ENCODE measurements at regions of chr13 and their contacts with region 1.

Region 1: DNA sequence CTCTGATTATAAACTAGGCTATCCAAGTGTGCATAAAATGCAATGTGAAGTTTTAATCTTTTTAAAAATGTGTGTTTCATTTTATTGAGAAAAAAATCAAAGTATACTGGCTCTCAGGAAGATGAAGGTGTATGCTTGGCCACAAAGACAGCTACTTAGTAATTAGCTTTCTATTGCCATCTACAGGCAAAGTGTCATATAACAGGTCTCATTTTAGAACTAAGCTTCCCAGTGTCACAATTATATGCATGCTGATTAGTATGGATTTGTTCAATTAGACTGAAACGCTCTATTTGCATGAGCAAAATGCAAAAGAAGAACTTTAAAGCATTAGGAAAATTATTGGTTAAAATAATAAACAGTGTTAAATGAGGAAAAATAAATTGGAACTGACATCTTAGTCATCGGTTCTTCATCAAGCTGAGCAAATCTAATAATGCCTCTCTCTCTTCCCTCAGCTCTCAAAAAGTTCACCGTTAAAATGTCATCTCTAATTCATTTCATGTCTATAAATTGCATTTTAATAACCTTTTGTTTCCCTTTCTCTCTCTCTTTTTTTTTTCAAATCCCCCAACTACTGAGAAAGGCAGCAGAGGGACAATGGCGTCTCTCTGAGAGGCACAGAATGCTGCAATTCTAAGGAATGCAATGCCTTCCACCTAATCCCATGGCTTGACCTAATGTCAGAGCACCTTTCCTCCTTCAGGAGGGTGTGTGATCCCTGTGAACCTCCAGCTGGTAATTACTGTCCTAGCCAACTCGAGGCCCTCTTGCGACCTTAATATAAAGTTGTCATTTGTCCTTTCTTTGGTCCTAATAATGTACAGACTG is 313.1 kb upstream of the MAB21L1 start:
- DNase-seq: no peak
- ATAC-seq: peak in 3 of 4 donors; percentile 60 to 79 (median 64)
- H3K4me3 ChIP-seq: no peak overlapping the region
- H3K27ac ChIP-seq: no peak overlapping the region
- H3K4me1 ChIP-seq: peaks cover 0 to 4% (median 0%) of the 10 kb centered on the region in 12 donors
- H3K27me3 ChIP-seq: no peaks in the 10 kb centered on the region
- CTCF ChIP-seq: peak; percentile 17 to 71 (median 61)
- POLR2A ChIP-seq: no peak

Region 2: DNA sequence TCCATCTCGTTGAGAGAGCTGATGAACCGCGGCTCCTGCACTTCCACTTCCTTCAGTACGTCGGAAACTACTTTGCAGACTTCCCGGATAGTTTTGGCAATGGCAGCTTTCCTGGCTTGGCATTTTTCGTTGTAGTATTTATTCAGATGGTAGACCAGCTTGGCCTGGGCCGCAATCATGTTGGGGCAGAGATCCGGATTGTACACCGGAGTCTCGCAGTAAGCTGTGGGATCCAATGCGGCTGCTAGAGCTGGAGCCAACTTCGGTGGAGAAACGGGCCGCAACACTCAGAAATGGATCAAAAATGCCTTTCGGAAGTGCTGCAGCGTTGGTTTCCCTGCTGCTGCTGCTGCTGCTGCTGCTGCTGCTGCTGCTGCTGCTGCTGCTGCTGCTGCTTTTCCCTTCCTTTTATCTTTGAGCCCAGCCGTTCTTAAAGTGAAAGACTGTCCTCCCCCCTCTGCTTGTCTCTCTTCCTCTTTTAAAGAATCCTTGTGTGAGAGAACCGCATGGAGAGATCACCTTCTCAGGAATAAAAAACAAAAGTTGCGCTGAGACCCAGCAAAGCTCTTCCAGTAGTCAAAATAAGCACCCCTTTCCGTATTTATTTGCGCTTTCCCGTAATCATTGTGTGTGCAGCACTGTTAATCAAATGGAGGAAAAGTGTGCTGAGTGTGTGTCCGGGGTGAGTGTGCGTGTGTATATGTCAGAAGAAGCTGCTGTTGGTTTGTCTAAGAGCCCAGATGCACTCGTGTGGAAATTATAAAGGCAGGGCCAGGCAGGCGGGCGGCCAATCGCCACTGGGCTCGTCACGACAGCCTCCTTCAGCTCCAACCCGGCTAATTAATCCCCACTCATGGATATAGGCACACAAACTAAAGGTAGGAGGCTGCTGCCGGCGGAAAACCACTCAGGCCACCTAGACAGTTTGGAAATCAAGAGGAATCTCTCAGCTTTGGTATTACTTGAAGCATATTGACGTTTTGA is 313.3 kb before region 1 on chr13 and contains the start of gene MAB21L1:
- intact Hi-C with region 1: loop called in 1 of 10 experiments (anchors 10 kb)
- DNase-seq: peak in 3 of 5 donors; percentile 12 to 46 (median 33)
- ATAC-seq: peak; percentile 34 to 62 (median 52)
- H3K4me3 ChIP-seq: peak within 1 kb of the TSS; percentile 32 to 72 (median 56)
- H3K27ac ChIP-seq: peak within 1 kb of the TSS in 11 of 12 donors; percentile 10 to 70 (median 43)
- H3K4me1 ChIP-seq: peaks cover 0 to 20% (median 0%) of the 10 kb centered on the region in 12 donors
- H3K27me3 ChIP-seq: peaks cover 0 to 55% (median 0%) of the 10 kb centered on the region in 9 donors
- CTCF ChIP-seq: no peak
- POLR2A ChIP-seq: no peak
- total RNA-seq, gene MAB21L1: 0.09 to 0.99 (median 0.27) TPM in 8 of 9 donors, not detected in the other

Region 3: DNA sequence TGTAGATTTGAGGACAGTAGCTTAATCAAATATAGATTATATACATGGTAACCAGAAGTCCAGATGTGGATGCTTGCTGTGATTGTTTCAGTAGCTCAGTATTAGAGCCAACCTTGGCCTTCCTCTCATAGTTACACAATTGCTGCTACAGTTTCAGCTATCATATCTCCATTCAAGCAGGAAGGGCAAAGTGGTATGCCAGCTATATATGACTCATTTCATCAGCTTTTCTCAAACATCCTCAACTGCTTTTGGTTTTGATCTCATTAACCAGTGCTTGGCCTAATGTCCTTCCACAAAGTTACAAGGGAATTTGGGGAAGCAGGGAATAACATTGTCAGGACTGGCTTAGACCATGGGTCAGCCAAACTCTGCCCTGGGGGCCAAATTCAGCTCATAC is 240.1 kb before region 1 on chr13:
- intact Hi-C with region 1: no loop called
- DNase-seq: no peak
- ATAC-seq: peak in 2 of 4 donors; percentile 53 to 85
- H3K4me3 ChIP-seq: no peak overlapping the region
- H3K27ac ChIP-seq: no peak overlapping the region
- H3K4me1 ChIP-seq: peaks cover 0 to 9% (median 0%) of the 10 kb centered on the region in 12 donors
- H3K27me3 ChIP-seq: no peaks in the 10 kb centered on the region
- CTCF ChIP-seq: no peak
- POLR2A ChIP-seq: no peak

Region 4: DNA sequence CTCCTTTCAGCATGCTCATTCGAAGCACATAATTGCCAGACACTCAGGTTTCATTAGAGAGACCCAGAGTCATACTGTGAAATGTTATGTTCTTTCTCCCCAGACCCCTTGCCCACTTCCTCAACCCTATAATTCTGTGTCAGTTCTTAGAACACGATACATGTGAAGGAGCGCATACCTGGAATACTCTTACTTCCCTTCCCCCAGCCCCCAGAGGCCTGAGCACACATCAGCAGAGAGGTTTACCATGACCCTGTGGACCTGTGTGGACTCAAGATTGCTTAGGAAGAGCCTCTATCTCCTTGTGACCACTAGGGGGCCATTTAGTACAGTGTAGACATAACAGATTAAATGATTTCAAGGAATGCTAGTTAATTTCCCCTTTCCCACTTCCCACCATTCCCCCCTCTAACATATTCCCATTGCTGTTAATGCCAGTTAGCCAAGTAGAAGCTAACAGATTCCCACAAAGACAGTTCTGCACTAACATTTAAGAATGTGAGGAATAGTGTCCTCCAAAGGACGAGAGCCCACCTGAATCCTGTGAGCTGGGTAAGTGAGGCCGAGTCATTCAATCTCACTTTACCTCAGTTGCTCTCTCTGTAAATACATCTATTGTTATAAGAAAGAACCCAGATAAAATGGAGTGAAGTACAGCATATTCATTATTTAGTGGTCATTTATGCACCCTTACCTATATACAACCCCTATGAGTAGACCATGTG is 158.8 kb before region 1 on chr13:
- intact Hi-C with region 1: loop called in 9 of 10 experiments (anchors 1 to 10 kb)
- DNase-seq: no peak
- ATAC-seq: peak in 3 of 4 donors; percentile 70 to 82 (median 79)
- H3K4me3 ChIP-seq: no peak overlapping the region
- H3K27ac ChIP-seq: no peak overlapping the region
- H3K4me1 ChIP-seq: no peaks in the 10 kb centered on the region
- H3K27me3 ChIP-seq: no peaks in the 10 kb centered on the region
- CTCF ChIP-seq: peak; percentile 44 to 77 (median 69)
- POLR2A ChIP-seq: no peak

Region 5: DNA sequence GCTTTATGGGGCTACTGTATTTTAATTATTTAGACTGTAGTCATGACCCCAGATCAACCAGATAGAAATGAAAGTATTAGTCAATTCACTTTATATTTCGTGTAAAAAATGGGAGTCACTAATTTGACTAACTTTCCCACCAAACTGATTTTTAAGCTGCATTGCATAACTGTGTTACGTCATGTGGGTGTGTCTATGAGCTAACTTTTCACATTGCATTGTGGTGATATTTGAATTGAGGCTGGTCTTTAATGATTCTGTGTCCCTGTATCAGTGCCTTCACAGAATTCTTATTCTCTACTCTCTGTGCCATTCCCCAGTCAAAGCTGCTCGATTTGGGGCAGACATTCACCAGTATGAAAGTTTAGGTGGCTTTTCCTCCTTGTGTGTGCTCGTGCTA is 140.4 kb before region 1 on chr13:
- intact Hi-C with region 1: loop called in 1 of 10 experiments (anchors 10 kb)
- DNase-seq: no peak
- ATAC-seq: peak in 2 of 4 donors; percentile 20 to 50
- H3K4me3 ChIP-seq: no peak overlapping the region
- H3K27ac ChIP-seq: no peak overlapping the region
- H3K4me1 ChIP-seq: peaks cover 0 to 6% (median 0%) of the 10 kb centered on the region in 12 donors
- H3K27me3 ChIP-seq: no peaks in the 10 kb centered on the region
- CTCF ChIP-seq: no peak
- POLR2A ChIP-seq: no peak

Region 6: DNA sequence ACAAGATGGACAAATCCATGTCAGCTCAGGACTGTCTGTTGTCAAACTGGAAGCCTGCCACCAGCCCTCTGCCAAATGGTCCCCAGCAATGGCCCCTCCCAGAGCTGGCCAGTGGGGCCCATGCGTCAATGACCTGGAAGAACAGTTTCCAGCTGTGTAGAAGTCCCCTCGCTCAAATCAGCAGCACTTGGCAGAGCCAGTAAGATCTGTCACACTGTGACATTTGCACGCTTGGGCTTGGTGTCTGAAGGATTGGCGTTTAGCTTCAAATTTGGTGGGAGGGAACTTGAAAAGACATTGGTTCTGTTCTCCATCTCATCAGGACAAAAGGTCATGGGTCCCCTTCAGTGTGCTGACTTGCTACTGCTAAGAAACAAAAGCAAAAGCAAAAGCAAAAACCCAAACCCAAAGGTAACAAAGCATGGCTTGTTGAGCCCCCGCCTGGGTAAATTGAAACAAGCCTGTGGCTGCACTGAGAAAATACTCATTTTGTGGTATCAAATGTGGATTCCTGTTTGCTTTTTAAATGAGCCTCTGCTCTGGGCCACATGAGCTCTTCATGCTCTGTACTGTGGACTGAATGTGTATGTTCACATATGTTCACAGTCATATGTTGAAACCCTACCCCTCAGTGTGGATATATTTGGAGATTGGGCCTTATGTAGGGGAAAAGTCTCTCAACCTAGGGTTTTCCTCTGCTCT is 59.5 kb before region 1 on chr13:
- intact Hi-C with region 1: loop called in 1 of 10 experiments (anchors 5 kb)
- DNase-seq: peak; percentile 77 to 94 (median 86)
- ATAC-seq: peak; percentile 87 to 96 (median 92)
- H3K4me3 ChIP-seq: no peak overlapping the region
- H3K27ac ChIP-seq: peak overlapping the region in 11 of 12 donors; percentile 9 to 75 (median 49)
- H3K4me1 ChIP-seq: peaks cover 0 to 44% (median 19%) of the 10 kb centered on the region in 12 donors
- H3K27me3 ChIP-seq: no peaks in the 10 kb centered on the region
- CTCF ChIP-seq: no peak
- POLR2A ChIP-seq: no peak